IMR-90 (cell line): ENCODE measurements at regions of chr3 and their contacts with region 1.

Region 1: GRCh38 chr3:21226086-21226485 is 524.9 kb downstream of the ZNF385D start:
- DNase-seq: no peak
- ATAC-seq: no peak
- H3K4me3 ChIP-seq: no peak overlapping the region
- H3K27ac ChIP-seq: no peak overlapping the region
- H3K4me1 ChIP-seq: no peaks in the 10 kb centered on the region
- H3K27me3 ChIP-seq: no peaks in the 10 kb centered on the region
- CTCF ChIP-seq: no peak
- POLR2A ChIP-seq: no peak
- RAD21 ChIP-seq: no peak

Region 2: GRCh38 chr3:20849975-20850374 is 376.1 kb before region 1 on chr3:
- CTCF ChIA-PET with region 1: no interaction called
- POLR2A ChIA-PET with region 1: no interaction called
- dilution Hi-C with region 1: no loop called
- in situ Hi-C with region 1: no loop called
- intact Hi-C with region 1: no loop called
- DNase-seq: no peak
- ATAC-seq: no peak
- H3K4me3 ChIP-seq: no peak overlapping the region
- H3K27ac ChIP-seq: no peak overlapping the region
- H3K4me1 ChIP-seq: no peaks in the 10 kb centered on the region
- H3K27me3 ChIP-seq: no peaks in the 10 kb centered on the region
- CTCF ChIP-seq: no peak
- POLR2A ChIP-seq: no peak
- RAD21 ChIP-seq: no peak

Region 3: GRCh38 chr3:21330293-21330692 is 104.2 kb after region 1 on chr3:
- CTCF ChIA-PET with region 1: no interaction called
- POLR2A ChIA-PET with region 1: no interaction called
- dilution Hi-C with region 1: no loop called
- in situ Hi-C with region 1: loop called (anchors 25 kb)
- intact Hi-C with region 1: no loop called
- DNase-seq: no peak
- ATAC-seq: no peak
- H3K4me3 ChIP-seq: no peak overlapping the region
- H3K27ac ChIP-seq: no peak overlapping the region
- H3K4me1 ChIP-seq: no peaks in the 10 kb centered on the region
- H3K27me3 ChIP-seq: no peaks in the 10 kb centered on the region
- CTCF ChIP-seq: no peak
- POLR2A ChIP-seq: no peak
- RAD21 ChIP-seq: no peak

Region 4: DNA sequence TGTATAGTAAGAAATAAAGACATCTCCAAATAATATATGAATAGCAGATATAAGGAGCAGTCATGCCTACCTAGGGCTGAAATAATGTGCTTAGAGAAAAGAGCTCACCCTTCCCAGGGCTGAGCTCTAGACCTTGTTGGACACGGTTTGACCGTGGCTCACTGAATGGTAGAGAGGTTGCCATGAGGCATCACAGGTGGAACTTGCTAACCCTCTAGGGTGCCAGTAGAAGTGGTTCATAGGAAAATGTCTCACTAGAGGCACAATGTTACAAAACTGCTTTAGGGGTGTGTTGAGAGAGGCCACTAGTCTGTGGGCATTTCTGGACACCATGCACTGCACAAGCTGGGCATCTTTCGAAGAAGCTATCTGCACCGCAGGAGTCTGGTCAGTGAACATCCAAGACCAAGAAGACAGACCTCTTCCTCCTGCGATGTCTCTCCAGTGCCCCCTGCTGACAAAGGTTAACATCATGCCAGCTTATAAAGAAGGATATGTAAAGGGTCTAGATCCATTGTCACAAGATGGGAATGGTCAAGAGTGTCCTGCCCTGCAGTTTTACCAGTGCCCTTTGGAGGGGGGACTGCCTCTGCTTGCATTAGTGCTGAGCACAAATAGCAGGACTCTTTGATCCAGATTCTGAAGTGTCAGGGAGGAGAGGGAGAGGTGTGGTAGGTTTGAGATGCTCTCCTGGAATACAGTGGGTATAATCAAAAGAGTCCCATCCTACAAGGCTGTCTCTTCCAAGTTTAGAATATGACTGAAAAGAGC is 258.2 kb after region 1 on chr3:
- CTCF ChIA-PET with region 1: no interaction called
- POLR2A ChIA-PET with region 1: no interaction called
- dilution Hi-C with region 1: no loop called
- in situ Hi-C with region 1: no loop called
- intact Hi-C with region 1: no loop called
- DNase-seq: peak; percentile 62
- ATAC-seq: peak; percentile 92
- H3K4me3 ChIP-seq: no peak overlapping the region
- H3K27ac ChIP-seq: no peak overlapping the region
- H3K4me1 ChIP-seq: no peaks in the 10 kb centered on the region
- H3K27me3 ChIP-seq: no peaks in the 10 kb centered on the region
- CTCF ChIP-seq: peak; percentile 56
- POLR2A ChIP-seq: no peak
- RAD21 ChIP-seq: peak; percentile 71